ENCODE measurements at regions of chr11 and their contacts with region 1.

Region 1: DNA sequence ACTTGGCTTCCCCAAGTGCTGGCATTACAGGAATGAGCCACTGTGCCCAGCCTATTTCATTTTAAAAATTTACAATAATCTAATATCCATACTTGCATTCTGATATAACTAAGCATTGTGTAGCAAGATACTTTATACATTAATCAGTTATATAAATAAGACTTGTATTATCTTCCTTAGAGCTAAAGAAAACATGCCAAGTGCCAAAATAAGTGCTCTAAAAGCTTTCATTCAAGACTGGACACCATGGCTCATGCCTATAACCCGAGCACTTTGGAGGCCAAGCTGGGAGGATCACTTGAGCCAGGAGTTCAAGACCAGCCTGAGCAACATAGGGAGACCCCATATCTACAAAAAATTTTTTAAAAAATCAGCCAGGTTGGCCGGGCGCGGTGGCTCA is 78.3 kb upstream of the CHRM4 start:
- DNase-seq: no peak
- H3K4me3 Mint-ChIP-seq: no peak overlapping the region
- H3K27ac Mint-ChIP-seq: no peak overlapping the region
- H3K4me1 Mint-ChIP-seq: peaks cover 29% of the 10 kb centered on the region
- H3K27me3 Mint-ChIP-seq: no peaks in the 10 kb centered on the region

Region 2: GRCh38 chr11:46438211-46438610 is 31.7 kb before region 1 on chr11:
- intact Hi-C with region 1: loop called (anchors 1 kb)
- DNase-seq: no peak
- H3K4me3 Mint-ChIP-seq: no peak overlapping the region
- H3K27ac Mint-ChIP-seq: no peak overlapping the region
- H3K4me1 Mint-ChIP-seq: no peaks in the 10 kb centered on the region
- H3K27me3 Mint-ChIP-seq: no peaks in the 10 kb centered on the region

Region 3: DNA sequence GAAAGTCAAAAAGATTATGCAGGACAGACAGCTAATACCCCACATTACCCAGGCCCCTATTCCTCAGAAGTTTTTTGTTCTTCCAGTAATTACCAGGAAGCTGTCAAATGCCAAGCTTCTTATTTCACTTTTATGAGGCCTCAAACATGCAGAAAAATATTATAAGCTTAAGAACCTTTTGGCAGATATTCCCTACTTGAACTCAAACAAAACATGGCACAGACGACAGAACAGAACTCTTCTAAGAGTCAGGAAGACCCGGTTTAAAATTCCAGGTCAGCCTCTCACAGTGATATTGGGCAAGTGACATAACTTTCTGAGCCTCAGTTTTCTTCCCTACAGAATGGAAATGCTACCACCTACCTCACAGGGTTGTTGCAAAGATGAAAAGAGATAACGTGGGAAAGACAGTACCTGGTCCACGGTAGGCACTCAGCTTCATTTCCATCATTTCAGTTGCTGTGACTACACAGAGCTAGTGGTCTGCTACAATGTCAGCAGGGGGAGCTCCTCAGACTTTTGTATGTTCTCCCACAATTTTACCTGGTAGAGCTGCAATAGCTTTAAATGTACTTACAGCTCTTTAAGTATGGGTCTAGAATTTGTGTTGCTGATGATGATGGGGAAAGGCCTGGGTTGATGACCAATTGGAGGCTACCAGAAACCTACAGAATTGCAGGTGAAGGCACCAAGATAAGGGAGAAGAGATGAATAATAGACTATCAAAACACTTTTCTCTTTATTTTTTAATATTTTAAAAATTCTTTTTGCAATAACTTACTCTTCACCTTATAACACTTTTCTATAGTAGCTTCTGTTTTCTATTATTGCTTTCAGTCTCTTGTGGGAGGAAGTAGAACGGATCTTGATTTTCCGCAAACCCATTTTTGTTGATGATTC is 20.0 kb after region 1 on chr11:
- intact Hi-C with region 1: no loop called
- DNase-seq: peak; percentile 18
- H3K4me3 Mint-ChIP-seq: no peak overlapping the region
- H3K27ac Mint-ChIP-seq: no peak overlapping the region
- H3K4me1 Mint-ChIP-seq: peaks cover 4% of the 10 kb centered on the region
- H3K27me3 Mint-ChIP-seq: no peaks in the 10 kb centered on the region

Region 4: DNA sequence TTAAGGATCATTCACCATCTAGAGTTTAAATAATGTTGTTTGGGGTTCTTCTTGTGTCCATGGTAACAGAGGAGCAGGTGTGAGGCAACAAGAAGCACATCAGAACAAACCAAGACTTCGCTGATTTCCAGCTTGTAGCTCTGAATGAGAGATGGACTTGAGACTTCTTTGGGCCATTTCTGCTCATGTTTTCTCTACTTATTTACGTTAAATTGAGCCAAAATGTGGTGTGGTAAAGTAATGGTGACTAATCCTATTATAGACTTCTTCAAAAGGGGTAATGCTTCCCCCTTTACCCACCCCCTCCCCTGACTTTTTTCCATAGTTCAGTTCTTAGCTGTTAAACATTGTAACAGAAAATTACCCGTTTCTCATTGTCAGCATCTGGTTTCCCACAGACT is 531.9 kb after region 1 on chr11:
- intact Hi-C with region 1: no loop called
- DNase-seq: no peak
- H3K4me3 Mint-ChIP-seq: no peak overlapping the region
- H3K27ac Mint-ChIP-seq: no peak overlapping the region
- H3K4me1 Mint-ChIP-seq: peaks cover 27% of the 10 kb centered on the region
- H3K27me3 Mint-ChIP-seq: no peaks in the 10 kb centered on the region

Measured in activated T-helper 1 cell treated with anti-CD3 and anti-CD28 coated beads, Interleukin-12 subunit alpha, Interleukin-12 subunit beta, Interleukin-2, Interleukin-4 antibody, amounts not matched to agents 30 ng/mL and 10 ng/mL and 1 ng/mL, durations not matched to agents 14 hours and 24 hours and 36 hours (primary cell).